Activated T-helper 2 cell treated with anti-CD3 and anti-CD28 coated beads, Interferon-gamma antibody, Interleukin-2, Interleukin-4, amounts not matched to agents 10 μg/mL and 5 μg/mL and 100 μg/mL, durations not matched to agents 14 hours and 24 hours and 36 hours (primary cell): ENCODE measurements at regions of chr9 and their contacts with region 1.

Region 1: DNA sequence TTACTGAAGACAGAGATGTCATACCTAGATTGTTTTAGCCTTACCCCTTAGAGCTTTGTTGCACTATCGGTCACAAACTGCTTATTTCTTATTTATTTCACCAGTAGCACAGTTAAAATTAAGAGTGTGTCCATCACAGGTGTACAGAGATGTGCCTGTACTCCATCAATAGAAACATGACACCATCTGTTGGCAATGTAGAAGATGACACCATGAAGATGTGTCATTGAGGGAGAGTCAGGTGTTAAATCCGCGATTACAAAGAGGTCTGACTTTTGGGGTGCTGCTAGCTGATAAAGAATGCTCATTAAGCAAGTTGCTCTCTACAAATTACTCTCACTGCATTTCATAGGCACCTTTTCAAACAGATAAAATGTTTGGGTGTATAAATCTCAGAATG is 164.4 kb downstream of the SMARCA2 start:
- DNase-seq: no peak
- H3K4me3 Mint-ChIP-seq: no peak overlapping the region
- H3K27ac Mint-ChIP-seq: no peak overlapping the region
- H3K4me1 Mint-ChIP-seq: no peaks in the 10 kb centered on the region
- H3K27me3 Mint-ChIP-seq: no peaks in the 10 kb centered on the region

Region 2: GRCh38 chr9:2132484-2133082 is 47.0 kb before region 1 on chr9:
- intact Hi-C with region 1: loop called (anchors 2 kb)
- DNase-seq: no peak
- H3K4me3 Mint-ChIP-seq: no peak overlapping the region
- H3K27ac Mint-ChIP-seq: no peak overlapping the region
- H3K4me1 Mint-ChIP-seq: peaks cover 7% of the 10 kb centered on the region
- H3K27me3 Mint-ChIP-seq: no peaks in the 10 kb centered on the region